Naive thymus-derived CD4-positive, alpha-beta T cell (primary cell): ENCODE measurements at regions of chr1 and their contacts with region 1.

Region 1: GRCh38 chr1:36149237-36149972 is at the start of gene TRAPPC3:
- DNase-seq: peak; percentile 96 to 100 (median 99)
- ATAC-seq: peak; percentile 96
- H3K4me3 ChIP-seq: peak within 1 kb of the TSS; percentile 95
- H3K4me3 Mint-ChIP-seq: peak within 1 kb of the TSS; percentile 90 to 100 (median 98)
- H3K27ac ChIP-seq: peak within 1 kb of the TSS; percentile 91
- H3K27ac Mint-ChIP-seq: peak within 1 kb of the TSS; percentile 97 to 100 (median 98)
- H3K4me1 ChIP-seq: peaks cover 35 to 52% of the 10 kb centered on the region in 2 donors
- H3K4me1 Mint-ChIP-seq: peaks cover 48 to 84% (median 66%) of the 10 kb centered on the region in 7 donors
- H3K27me3 ChIP-seq: no peaks in the 10 kb centered on the region
- H3K27me3 Mint-ChIP-seq: no peaks in the 10 kb centered on the region
- total RNA-seq, gene TRAPPC3: 32.1 to 60.5 (median 47.2) TPM

Region 2: DNA sequence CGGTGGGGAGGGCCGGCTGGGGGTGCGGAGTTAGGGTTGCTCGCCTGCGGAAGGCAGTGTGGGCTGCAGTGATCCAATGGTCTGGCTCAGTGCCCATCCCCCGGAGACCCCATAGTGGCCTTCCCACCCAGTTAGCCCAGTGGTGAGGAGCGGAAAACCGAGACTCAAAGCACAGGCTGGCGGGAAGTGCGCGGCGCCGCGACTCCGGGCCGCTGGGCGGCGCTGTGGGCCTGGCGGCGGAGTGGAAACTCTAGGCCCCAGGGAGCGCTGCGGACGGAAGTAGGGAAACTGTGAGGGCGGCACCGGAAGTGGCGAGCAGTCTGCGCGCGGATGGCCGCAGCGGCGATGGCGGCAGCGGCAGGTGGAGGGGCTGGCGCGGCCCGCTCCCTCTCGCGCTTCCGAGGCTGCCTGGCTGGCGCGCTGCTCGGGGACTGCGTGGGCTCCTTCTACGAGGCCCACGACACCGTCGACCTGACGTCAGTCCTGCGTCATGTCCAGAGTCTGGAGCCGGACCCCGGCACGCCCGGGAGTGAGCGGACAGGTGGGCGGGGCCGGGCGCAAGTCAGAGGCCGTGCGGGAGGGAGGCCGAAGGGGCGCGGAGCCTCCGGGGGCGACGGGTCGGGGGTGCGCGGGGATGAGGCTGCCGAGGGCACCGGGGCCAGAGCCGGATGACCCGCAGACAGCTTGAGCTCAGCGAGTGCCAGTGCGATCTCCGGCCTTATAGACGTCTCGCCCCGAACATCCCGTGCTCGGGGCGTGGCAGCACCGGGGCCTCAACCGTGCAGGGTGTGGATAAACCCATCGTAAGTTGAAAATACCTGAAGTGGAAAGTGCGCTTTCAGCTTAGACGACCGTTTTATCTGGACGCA is 60.6 kb before region 1 on chr1 and contains the start of gene ADPRS:
- CTCF ChIA-PET with region 1: interaction called, 3 read pairs
- POLR2A ChIA-PET with region 1: interaction called, 6 read pairs
- intact Hi-C with region 1: loop called (anchors 1 kb)
- DNase-seq: peak; percentile 81 to 95 (median 88)
- ATAC-seq: peak; percentile 98
- H3K4me3 ChIP-seq: peak within 1 kb of the TSS; percentile 47
- H3K4me3 Mint-ChIP-seq: peak within 1 kb of the TSS; percentile 83 to 96 (median 93)
- H3K27ac ChIP-seq: peak within 1 kb of the TSS; percentile 98
- H3K27ac Mint-ChIP-seq: peak within 1 kb of the TSS; percentile 86 to 97 (median 90)
- H3K4me1 ChIP-seq: peaks cover 11 to 16% of the 10 kb centered on the region in 2 donors
- H3K4me1 Mint-ChIP-seq: peaks cover 12 to 30% (median 23%) of the 10 kb centered on the region in 7 donors
- H3K27me3 ChIP-seq: peaks cover 0 to 5% of the 10 kb centered on the region in 2 donors
- H3K27me3 Mint-ChIP-seq: peaks cover 10 to 18% (median 10%) of the 10 kb centered on the region in 5 donors
- total RNA-seq, gene ADPRS: 18.0 to 30.2 (median 24.2) TPM

Region 3: GRCh38 chr1:36115200-36115669 is 34.2 kb before region 1 on chr1:
- CTCF ChIA-PET with region 1: no interaction called
- POLR2A ChIA-PET with region 1: no interaction called
- intact Hi-C with region 1: no loop called
- DNase-seq: no peak
- ATAC-seq: no peak
- H3K4me3 ChIP-seq: no peak overlapping the region
- H3K4me3 Mint-ChIP-seq: no peak overlapping the region
- H3K27ac ChIP-seq: no peak overlapping the region
- H3K27ac Mint-ChIP-seq: no peak overlapping the region
- H3K4me1 ChIP-seq: no peaks in the 10 kb centered on the region
- H3K4me1 Mint-ChIP-seq: peaks cover 7 to 15% (median 10%) of the 10 kb centered on the region in 7 donors
- H3K27me3 ChIP-seq: no peaks in the 10 kb centered on the region
- H3K27me3 Mint-ChIP-seq: peaks cover 0 to 6% (median 4%) of the 10 kb centered on the region in 5 donors

Region 4: DNA sequence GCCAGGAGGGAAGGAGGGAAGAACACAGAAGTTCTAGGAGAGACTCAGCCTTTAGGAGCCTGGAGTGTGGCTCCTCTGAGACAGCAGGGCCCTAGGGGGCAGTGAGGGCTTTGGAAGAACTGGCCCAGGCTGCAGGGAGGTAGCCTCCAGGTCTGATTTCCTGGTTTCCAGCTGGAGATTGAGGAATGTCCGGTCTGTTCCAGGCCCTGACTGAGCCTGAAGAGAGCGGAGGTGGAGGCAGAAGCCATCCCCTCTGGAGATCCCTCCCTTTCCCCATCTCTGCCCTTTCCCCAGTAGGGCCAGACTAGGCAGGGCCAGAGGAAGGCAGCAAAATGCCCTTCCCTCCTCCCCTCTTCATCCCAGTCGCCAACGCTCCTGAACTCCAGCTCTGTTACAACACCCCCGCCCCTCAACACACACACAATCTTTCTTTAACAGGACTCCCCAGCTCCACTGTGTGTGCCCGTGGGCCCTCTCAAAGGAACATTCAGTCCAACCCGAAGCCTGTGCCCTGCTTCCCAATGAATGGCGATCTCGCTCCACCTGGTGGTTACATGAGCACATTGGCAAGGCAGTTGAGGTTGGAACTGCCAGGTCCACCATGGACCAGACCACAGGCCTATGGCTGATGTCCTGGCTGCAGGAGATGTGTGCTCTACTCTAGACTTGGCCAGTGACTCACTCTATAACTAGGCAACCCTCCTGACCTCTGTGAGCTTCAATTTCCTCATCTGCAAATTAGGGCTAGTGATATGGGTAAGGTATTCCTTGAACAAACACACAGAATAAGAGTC is 38.6 kb after region 1 on chr1:
- CTCF ChIA-PET with region 1: interaction called, 165 read pairs
- POLR2A ChIA-PET with region 1: interaction called, 138 read pairs
- intact Hi-C with region 1: loop called (anchors 1 kb)
- DNase-seq: peak; percentile 56 to 86 (median 80)
- ATAC-seq: peak; percentile 99
- H3K4me3 ChIP-seq: no peak overlapping the region
- H3K4me3 Mint-ChIP-seq: no peak overlapping the region
- H3K27ac ChIP-seq: no peak overlapping the region
- H3K27ac Mint-ChIP-seq: peak overlapping the region; percentile 37 to 85 (median 73)
- H3K4me1 ChIP-seq: no peaks in the 10 kb centered on the region
- H3K4me1 Mint-ChIP-seq: peaks cover 0 to 16% (median 12%) of the 10 kb centered on the region in 7 donors
- H3K27me3 ChIP-seq: no peaks in the 10 kb centered on the region
- H3K27me3 Mint-ChIP-seq: no peaks in the 10 kb centered on the region

Region 5: DNA sequence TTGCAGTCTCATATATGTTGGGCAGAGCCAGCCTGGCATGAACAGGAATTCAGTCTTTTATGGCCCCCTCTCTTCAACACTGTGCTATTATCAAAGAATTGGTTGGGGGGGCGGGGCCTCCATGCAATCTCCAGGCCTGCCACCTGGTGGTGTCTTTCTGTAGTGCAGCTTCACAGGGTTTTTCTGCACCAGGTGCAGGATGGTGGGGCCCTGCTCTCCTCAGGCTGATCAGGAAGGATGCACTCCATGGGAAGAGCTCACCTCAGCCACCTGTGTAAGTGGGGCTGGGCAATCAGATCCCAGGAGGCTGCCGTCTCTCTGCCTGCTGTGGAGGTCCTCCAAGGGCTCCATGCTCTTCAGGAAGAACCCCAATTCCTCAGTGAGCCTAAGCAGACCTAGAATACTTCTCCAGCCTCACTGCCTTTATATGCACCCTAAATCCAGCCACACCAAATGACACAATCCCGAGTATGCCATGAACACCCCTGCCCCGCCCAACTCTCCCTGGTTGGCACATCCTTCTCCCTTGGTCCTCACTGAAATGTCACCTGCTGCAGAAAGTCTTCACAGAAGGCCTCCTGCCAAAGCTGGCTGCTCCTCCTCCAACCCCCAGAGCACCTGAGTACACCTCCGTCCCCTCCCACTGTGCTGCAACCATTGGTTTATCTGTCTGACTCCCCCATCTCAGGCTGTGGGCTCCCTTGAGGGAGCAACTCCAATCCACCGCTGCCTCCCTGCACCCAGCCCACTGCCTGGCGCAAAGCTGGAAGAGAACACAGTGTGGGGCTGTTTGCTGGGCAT is 219.9 kb after region 1 on chr1:
- CTCF ChIA-PET with region 1: interaction called, 4 read pairs
- POLR2A ChIA-PET with region 1: no interaction called
- intact Hi-C with region 1: loop called in 1 of 2 experiments (anchors 1 kb)
- DNase-seq: peak; percentile 70 to 87 (median 80)
- ATAC-seq: peak; percentile 75
- H3K4me3 ChIP-seq: no peak overlapping the region
- H3K4me3 Mint-ChIP-seq: peak overlapping the region in 7 of 10 donors; percentile 2 to 57 (median 32)
- H3K27ac ChIP-seq: peak overlapping the region; percentile 37
- H3K27ac Mint-ChIP-seq: peak overlapping the region; percentile 56 to 97 (median 94)
- H3K4me1 ChIP-seq: peaks cover 27 to 59% of the 10 kb centered on the region in 2 donors
- H3K4me1 Mint-ChIP-seq: peaks cover 50 to 79% (median 69%) of the 10 kb centered on the region in 7 donors
- H3K27me3 ChIP-seq: no peaks in the 10 kb centered on the region
- H3K27me3 Mint-ChIP-seq: no peaks in the 10 kb centered on the region

Region 6: GRCh38 chr1:36450270-36450918 is 301.0 kb after region 1 on chr1 and contains the start of gene OSCP1:
- CTCF ChIA-PET with region 1: no interaction called
- POLR2A ChIA-PET with region 1: no interaction called
- intact Hi-C with region 1: loop called in 1 of 2 experiments (anchors 1 kb)
- DNase-seq: peak; percentile 73 to 88 (median 83)
- ATAC-seq: peak; percentile 98
- H3K4me3 ChIP-seq: peak within 1 kb of the TSS; percentile 93
- H3K4me3 Mint-ChIP-seq: peak within 1 kb of the TSS; percentile 88 to 98 (median 92)
- H3K27ac ChIP-seq: peak within 1 kb of the TSS; percentile 94
- H3K27ac Mint-ChIP-seq: peak within 1 kb of the TSS; percentile 81 to 99 (median 96)
- H3K4me1 ChIP-seq: peaks cover 0 to 10% of the 10 kb centered on the region in 2 donors
- H3K4me1 Mint-ChIP-seq: peaks cover 7 to 30% (median 23%) of the 10 kb centered on the region in 7 donors
- H3K27me3 ChIP-seq: no peaks in the 10 kb centered on the region
- H3K27me3 Mint-ChIP-seq: no peaks in the 10 kb centered on the region
- total RNA-seq, gene OSCP1: 0.65 to 2.0 (median 0.93) TPM

Region 7: DNA sequence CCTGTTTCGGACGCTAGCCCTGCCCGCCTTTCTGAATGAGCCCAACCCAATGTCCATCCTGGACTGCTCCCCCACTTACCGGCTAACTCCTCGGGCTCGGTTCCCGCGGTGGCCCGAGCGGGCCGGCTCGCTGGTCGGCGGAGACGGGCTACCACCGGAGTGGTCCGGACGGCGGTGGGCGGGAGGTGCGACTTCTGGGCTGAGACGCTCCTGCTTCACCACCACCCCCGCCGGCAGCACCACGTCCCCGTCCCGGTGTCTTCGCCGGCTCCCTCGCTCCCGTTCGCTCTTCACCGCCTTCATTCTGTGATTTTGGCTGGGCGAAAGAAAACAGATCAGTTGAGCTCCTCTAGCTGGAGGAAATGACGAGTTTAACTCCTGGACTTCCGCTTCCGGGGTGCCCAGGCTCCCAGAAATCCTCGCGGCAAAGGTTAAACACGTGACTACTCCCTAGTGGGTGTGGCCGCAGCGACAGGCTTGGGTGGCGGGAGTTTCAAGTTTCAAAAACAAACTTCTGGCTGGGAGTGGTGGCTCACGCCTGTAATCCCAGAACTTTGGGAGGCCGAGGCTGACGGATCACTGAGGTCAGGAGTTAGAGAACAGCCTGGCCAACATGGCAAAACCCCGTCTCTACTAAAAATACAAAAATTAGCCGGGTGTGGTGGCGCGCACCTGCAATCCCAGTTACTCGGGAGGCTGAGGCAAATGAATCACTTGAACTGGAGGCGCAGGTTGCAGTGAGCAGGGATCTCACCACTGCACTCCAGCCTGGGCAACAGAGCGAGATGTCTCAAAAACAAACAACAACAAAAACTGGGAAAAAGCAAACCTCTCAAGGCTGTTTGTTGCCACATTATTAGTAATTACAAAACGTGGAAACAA is 1404.8 kb after region 1 on chr1 and contains the start of gene SNIP1:
- CTCF ChIA-PET with region 1: no interaction called
- POLR2A ChIA-PET with region 1: no interaction called
- intact Hi-C with region 1: loop called in 1 of 2 experiments (anchors 10 kb)
- DNase-seq: peak; percentile 67 to 94 (median 92)
- ATAC-seq: peak; percentile 99
- H3K4me3 ChIP-seq: peak within 1 kb of the TSS; percentile 92
- H3K4me3 Mint-ChIP-seq: peak within 1 kb of the TSS; percentile 97 to 100 (median 99)
- H3K27ac ChIP-seq: peak within 1 kb of the TSS; percentile 94
- H3K27ac Mint-ChIP-seq: peak within 1 kb of the TSS; percentile 91 to 99 (median 98)
- H3K4me1 ChIP-seq: peaks cover 10 to 24% of the 10 kb centered on the region in 2 donors
- H3K4me1 Mint-ChIP-seq: peaks cover 23 to 51% (median 45%) of the 10 kb centered on the region in 7 donors
- H3K27me3 ChIP-seq: no peaks in the 10 kb centered on the region
- H3K27me3 Mint-ChIP-seq: peaks cover 0 to 6% (median 0%) of the 10 kb centered on the region in 5 donors
- total RNA-seq, gene SNIP1: 27.8 to 53.6 (median 36.7) TPM